ENCODE measurements at regions of chr11 and their contacts with region 1.

Region 1: DNA sequence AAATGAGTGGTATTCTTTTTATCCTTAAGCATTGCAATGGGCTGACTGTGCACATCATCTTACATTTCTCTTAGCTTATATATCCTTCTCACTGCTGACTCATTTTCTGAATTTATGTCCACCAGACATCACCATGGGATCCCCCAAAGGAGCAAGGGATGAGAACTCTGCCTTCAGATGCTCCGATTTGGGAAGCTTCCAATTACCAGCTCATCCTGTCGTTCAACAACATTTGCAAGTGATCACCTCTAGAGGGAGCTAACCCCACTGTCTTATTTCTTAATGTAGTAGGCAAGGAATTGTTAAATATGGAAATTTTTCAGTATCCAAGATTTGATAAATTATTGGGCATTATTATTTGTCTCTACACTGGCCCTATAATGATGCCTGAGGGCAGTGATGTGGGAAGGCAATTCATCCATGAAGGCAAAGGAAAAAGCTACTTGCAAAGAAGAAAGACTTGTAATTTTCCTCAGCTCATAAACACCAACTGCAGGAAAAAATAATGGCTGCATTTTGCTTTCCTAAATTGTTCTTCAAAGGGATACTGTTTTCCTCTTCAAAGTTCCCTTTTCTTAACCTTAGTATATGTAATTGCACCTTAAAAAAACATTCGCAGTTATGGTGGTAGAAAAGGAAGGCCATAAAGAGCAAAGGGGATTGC is 102.4 kb upstream of the FSHB start:
- DNase-seq: peak; percentile 67
- H3K4me3 Mint-ChIP-seq: no peak overlapping the region
- H3K27ac Mint-ChIP-seq: no peak overlapping the region
- H3K4me1 Mint-ChIP-seq: peaks cover 6% of the 10 kb centered on the region
- H3K27me3 Mint-ChIP-seq: no peaks in the 10 kb centered on the region
- CTCF ChIP-seq: peak; percentile 60

Region 2: GRCh38 chr11:29432719-29433325 is 695.6 kb before region 1 on chr11:
- CTCF ChIA-PET with region 1: interaction called, 39 read pairs
- POLR2A ChIA-PET with region 1: no interaction called
- intact Hi-C with region 1: no loop called
- DNase-seq: peak; percentile 47
- H3K4me3 Mint-ChIP-seq: no peak overlapping the region
- H3K27ac Mint-ChIP-seq: no peak overlapping the region
- H3K4me1 Mint-ChIP-seq: peaks cover 8% of the 10 kb centered on the region
- H3K27me3 Mint-ChIP-seq: no peaks in the 10 kb centered on the region
- CTCF ChIP-seq: peak; percentile 69

Region 3: GRCh38 chr11:29634248-29634647 is 494.2 kb before region 1 on chr11:
- CTCF ChIA-PET with region 1: interaction called, 13 read pairs
- POLR2A ChIA-PET with region 1: no interaction called
- intact Hi-C with region 1: no loop called
- DNase-seq: peak; percentile 30
- H3K4me3 Mint-ChIP-seq: no peak overlapping the region
- H3K27ac Mint-ChIP-seq: no peak overlapping the region
- H3K4me1 Mint-ChIP-seq: peaks cover 4% of the 10 kb centered on the region
- H3K27me3 Mint-ChIP-seq: no peaks in the 10 kb centered on the region
- CTCF ChIP-seq: peak; percentile 28

Region 4: DNA sequence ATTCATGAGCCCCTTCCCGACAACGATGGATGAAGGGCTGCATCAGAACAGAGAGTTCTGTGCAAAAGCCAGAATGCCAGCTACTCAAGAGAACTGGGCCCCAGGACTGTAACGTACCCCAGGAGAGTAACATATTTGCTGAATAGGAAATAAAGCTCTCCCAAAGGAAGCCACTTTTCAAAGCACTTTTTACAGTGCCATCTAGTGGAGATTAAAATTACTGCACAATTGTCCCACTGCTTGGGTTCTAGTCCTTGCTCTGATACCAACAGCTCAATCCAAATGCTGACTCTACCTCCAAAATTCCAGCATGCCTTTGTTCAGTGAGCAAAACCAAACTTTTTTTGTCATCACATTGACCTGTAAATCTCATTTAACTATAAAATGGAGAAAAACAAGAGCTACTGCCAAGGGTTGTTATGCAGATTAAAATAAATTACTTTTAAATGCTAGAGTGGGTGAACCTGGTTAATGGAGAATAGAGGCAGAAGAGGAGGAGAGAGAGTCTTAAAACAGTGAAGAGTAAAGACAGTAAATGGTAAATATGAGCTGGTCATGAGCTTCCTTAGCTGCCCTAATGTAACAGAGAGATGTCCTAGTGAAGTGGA is 14.8 kb after region 1 on chr11:
- CTCF ChIA-PET with region 1: interaction called, 203 read pairs
- POLR2A ChIA-PET with region 1: interaction called, 6 read pairs
- intact Hi-C with region 1: no loop called
- DNase-seq: peak; percentile 60
- H3K4me3 Mint-ChIP-seq: no peak overlapping the region
- H3K27ac Mint-ChIP-seq: no peak overlapping the region
- H3K4me1 Mint-ChIP-seq: no peaks in the 10 kb centered on the region
- H3K27me3 Mint-ChIP-seq: no peaks in the 10 kb centered on the region
- CTCF ChIP-seq: peak; percentile 75

Region 5: GRCh38 chr11:30196400-30197206 is 68.2 kb after region 1 on chr11:
- CTCF ChIA-PET with region 1: interaction called, 71 read pairs
- POLR2A ChIA-PET with region 1: interaction called, 11 read pairs
- intact Hi-C with region 1: loop called (anchors 2 kb)
- DNase-seq: peak; percentile 65
- H3K4me3 Mint-ChIP-seq: no peak overlapping the region
- H3K27ac Mint-ChIP-seq: peak overlapping the region; percentile 88
- H3K4me1 Mint-ChIP-seq: no peaks in the 10 kb centered on the region
- H3K27me3 Mint-ChIP-seq: no peaks in the 10 kb centered on the region
- CTCF ChIP-seq: peak; percentile 64

Region 6: GRCh38 chr11:30333405-30333804 is 205.0 kb after region 1 on chr11:
- CTCF ChIA-PET with region 1: interaction called, 52 read pairs
- POLR2A ChIA-PET with region 1: no interaction called
- intact Hi-C with region 1: no loop called
- DNase-seq: peak; percentile 25
- H3K4me3 Mint-ChIP-seq: no peak overlapping the region
- H3K27ac Mint-ChIP-seq: no peak overlapping the region
- H3K4me1 Mint-ChIP-seq: peaks cover 10% of the 10 kb centered on the region
- H3K27me3 Mint-ChIP-seq: no peaks in the 10 kb centered on the region
- CTCF ChIP-seq: peak; percentile 34